ENCODE measurements at regions of chr2 and their contacts with region 1.

Region 1: DNA sequence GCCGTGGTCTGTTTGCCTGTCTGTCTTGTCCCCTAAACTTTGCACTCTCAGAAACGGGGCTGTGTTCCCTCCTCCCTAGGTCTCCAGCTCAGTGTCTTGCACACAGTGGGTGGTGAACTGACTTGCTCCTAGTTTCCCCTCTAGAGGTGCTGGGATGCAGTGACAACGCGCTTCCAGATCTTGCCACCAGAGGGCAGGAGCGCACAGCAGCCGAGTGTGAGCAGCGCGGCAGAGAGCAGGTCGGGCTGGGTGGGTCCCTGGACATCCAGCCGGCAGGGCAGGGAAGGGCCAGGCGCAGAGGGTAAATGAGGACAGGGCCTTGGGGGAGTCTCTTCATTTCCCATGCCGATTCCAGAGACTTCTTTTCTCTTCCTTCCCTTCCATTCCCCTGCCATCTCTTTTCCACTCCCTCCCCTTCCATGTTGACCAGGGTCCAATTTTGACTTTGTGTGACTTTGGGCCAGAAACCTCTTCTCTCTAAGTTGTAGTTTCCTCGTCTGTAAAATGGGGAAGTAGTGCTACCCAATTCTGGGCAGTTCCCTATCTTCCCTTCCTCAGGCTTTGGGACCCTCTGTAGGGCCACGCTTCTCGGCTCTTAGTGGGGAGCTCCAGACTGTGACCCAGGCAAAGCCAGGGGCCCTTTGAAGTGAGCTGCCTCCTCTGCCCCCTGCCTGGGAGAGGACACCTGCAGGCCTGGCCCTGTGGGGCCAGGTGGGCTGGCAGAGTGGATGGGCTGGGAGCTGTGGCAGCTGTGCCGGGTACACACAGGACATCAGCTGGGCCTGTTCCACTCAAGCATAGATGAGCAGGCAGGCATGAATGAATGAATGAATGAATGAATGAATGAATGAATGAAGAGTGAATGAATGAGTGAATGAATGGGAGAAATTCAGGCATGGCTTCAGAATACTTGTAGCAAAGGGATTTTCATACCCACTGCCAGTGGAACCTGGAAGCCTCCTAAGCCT is 43.3 kb upstream of the TAF1B start:
- DNase-seq: peak; percentile 92
- H3K4me3 Mint-ChIP-seq: peak overlapping the region; percentile 72
- H3K27ac Mint-ChIP-seq: peak overlapping the region; percentile 98
- H3K4me1 Mint-ChIP-seq: peaks cover 49% of the 10 kb centered on the region
- H3K27me3 Mint-ChIP-seq: no peaks in the 10 kb centered on the region

Region 2: GRCh38 chr2:9565436-9566153 is 234.4 kb before region 1 on chr2:
- CTCF ChIA-PET with region 1: no interaction called
- POLR2A ChIA-PET with region 1: no interaction called
- DNase-seq: no peak
- H3K4me3 Mint-ChIP-seq: no peak overlapping the region
- H3K27ac Mint-ChIP-seq: no peak overlapping the region
- H3K4me1 Mint-ChIP-seq: peaks cover 3% of the 10 kb centered on the region
- H3K27me3 Mint-ChIP-seq: no peaks in the 10 kb centered on the region

Region 3: DNA sequence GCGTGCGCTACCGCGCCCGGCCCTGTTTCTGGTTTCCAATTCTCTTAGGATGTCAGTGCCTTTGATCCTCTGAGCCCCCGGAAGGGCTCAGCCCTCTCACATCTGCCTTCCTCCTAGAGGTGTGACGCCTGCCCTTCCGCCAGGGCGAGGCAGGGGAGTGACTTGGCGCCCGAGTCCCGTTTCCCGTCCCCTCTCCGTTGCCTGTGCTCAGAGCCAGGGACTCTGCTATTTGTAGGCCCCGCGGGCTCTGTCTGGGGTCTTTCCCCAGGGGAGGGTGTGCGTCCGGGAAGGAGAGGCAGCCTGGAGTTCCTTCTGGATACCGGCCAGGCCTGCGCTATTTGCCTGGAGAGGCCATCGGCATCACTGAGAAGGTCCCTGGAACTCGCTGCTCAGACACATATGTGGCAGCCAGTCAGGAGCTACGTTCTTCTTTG is 60.4 kb before region 1 on chr2:
- CTCF ChIA-PET with region 1: interaction called, 11 read pairs
- POLR2A ChIA-PET with region 1: interaction called, 3 read pairs
- DNase-seq: peak; percentile 77
- H3K4me3 Mint-ChIP-seq: peak overlapping the region; percentile 72
- H3K27ac Mint-ChIP-seq: peak overlapping the region; percentile 93
- H3K4me1 Mint-ChIP-seq: peaks cover 61% of the 10 kb centered on the region
- H3K27me3 Mint-ChIP-seq: peaks cover 2% of the 10 kb centered on the region

Region 4: GRCh38 chr2:9778012-9778411 is 21.9 kb before region 1 on chr2:
- CTCF ChIA-PET with region 1: interaction called, 154 read pairs
- POLR2A ChIA-PET with region 1: interaction called, 56 read pairs
- DNase-seq: peak; percentile 41
- H3K4me3 Mint-ChIP-seq: no peak overlapping the region
- H3K27ac Mint-ChIP-seq: no peak overlapping the region
- H3K4me1 Mint-ChIP-seq: peaks cover 54% of the 10 kb centered on the region
- H3K27me3 Mint-ChIP-seq: no peaks in the 10 kb centered on the region

Region 5: DNA sequence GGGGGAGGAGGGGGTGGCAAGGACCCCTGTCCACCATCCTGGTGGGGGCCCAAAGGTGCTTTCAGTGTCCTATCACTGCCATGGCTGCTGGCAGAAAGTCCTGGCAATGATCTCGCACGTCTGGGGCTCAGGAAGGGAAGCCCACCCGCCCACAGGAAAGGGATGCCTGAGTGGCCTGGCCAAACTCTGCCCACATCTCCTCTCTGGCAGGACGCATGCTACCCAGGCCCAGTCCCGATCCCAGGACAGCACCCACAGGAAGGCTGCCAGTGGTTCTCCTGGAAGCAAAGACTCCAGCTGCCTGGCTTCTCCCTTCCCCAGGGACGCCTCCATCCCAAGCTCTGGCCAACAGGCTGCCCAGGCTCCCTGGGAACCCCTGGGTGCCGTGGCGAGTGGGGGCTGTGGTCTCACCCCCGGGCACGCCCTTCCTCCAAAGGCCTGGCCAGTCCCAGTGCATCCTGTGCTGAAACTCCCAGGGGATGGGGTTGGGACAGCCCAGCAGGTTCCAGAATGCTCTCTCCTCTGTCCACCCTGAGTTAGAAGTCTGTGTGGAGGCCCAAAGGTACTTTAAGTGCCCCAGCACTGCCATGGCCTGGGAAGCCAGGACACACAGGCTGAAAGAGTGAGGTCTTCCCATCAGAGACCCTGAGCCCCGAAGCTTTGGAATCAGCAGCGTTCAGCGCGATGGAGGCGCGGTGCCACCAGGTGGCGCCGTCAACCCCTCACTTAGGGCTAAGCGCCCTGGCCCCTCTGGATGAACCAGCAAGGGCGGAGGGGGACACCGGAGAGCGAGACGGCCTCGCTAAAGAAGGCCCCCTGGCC is 13.6 kb after region 1 on chr2:
- CTCF ChIA-PET with region 1: interaction called, 93 read pairs
- POLR2A ChIA-PET with region 1: interaction called, 5 read pairs
- DNase-seq: peak; percentile 79
- H3K4me3 Mint-ChIP-seq: no peak overlapping the region
- H3K27ac Mint-ChIP-seq: no peak overlapping the region
- H3K4me1 Mint-ChIP-seq: peaks cover 35% of the 10 kb centered on the region
- H3K27me3 Mint-ChIP-seq: peaks cover 7% of the 10 kb centered on the region

Region 6: GRCh38 chr2:10043906-10044601 is 244.1 kb after region 1 on chr2:
- CTCF ChIA-PET with region 1: interaction called, 32 read pairs
- POLR2A ChIA-PET with region 1: interaction called, 6 read pairs
- DNase-seq: peak; percentile 95
- H3K4me3 Mint-ChIP-seq: peak overlapping the region; percentile 80
- H3K27ac Mint-ChIP-seq: peak overlapping the region; percentile 81
- H3K4me1 Mint-ChIP-seq: peaks cover 44% of the 10 kb centered on the region
- H3K27me3 Mint-ChIP-seq: peaks cover 26% of the 10 kb centered on the region

Measured in activated CD4-positive, alpha-beta memory T cell treated with anti-CD3 and anti-CD28 coated beads, Interleukin-2, amount 10 ng/mL, durations not matched to agents 7 days and 5 days (primary cell).